ENCODE measurements at regions of chr2 and their contacts with region 1.

Region 1: GRCh38 chr2:188291617-188292347 is at the start of gene GULP1:
- DNase-seq: peak; percentile 75
- ATAC-seq: peak; percentile 45
- H3K4me3 ChIP-seq: peak within 1 kb of the TSS; percentile 87
- H3K27ac ChIP-seq: peak within 1 kb of the TSS; percentile 83
- H3K4me1 ChIP-seq: peaks cover 33% of the 10 kb centered on the region
- H3K27me3 ChIP-seq: no peaks in the 10 kb centered on the region
- CTCF ChIP-seq: peak; percentile 77
- total RNA-seq, gene GULP1: 23.1 and 25.5 TPM in 2 replicates

Region 2: GRCh38 chr2:187594801-187595200 is 697.0 kb before region 1 on chr2:
- CTCF ChIA-PET with region 1: no interaction called
- POLR2A ChIA-PET with region 1: no interaction called
- intact Hi-C with region 1: loop called (anchors 5 kb)
- DNase-seq: no peak
- ATAC-seq: no peak
- H3K4me3 ChIP-seq: no peak overlapping the region
- H3K27ac ChIP-seq: no peak overlapping the region
- H3K4me1 ChIP-seq: no peaks in the 10 kb centered on the region
- H3K27me3 ChIP-seq: no peaks in the 10 kb centered on the region
- CTCF ChIP-seq: peak; percentile 45; the same call in 1 of the 2 replicates

Region 3: GRCh38 chr2:188322569-188323551 is 31.1 kb after region 1 on chr2:
- CTCF ChIA-PET with region 1: no interaction called
- POLR2A ChIA-PET with region 1: interaction called, 7 read pairs
- intact Hi-C with region 1: loop called (anchors 1 kb)
- DNase-seq: peak; percentile 75
- ATAC-seq: peak; percentile 84
- H3K4me3 ChIP-seq: peak overlapping the region; percentile 51
- H3K27ac ChIP-seq: peak overlapping the region; percentile 99
- H3K4me1 ChIP-seq: peaks cover 39% of the 10 kb centered on the region
- H3K27me3 ChIP-seq: no peaks in the 10 kb centered on the region
- CTCF ChIP-seq: no peak

Region 4: DNA sequence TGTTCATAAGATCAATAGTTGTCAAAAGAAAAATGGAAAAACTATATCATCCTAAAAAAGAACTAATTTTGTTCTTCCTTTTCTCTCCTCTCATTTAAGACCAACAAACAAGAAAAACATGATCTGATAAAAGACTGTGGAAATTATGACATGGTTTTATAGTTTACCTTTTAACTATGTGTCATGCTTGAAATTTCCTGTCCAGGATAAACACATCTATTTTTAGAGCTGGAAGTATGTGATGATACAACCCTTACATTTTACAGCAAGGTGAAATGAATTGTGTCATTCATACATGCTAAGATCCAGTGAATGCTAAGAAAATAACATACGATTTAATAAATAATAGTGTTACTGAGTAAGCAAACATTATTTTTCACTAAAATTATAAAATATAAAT is 89.8 kb after region 1 on chr2:
- CTCF ChIA-PET with region 1: no interaction called
- POLR2A ChIA-PET with region 1: no interaction called
- intact Hi-C with region 1: loop called (anchors 2 kb)
- DNase-seq: peak; percentile 89
- ATAC-seq: peak; percentile 94
- H3K4me3 ChIP-seq: no peak overlapping the region
- H3K27ac ChIP-seq: peak overlapping the region; percentile 74
- H3K4me1 ChIP-seq: peaks cover 29% of the 10 kb centered on the region
- H3K27me3 ChIP-seq: no peaks in the 10 kb centered on the region
- CTCF ChIP-seq: no peak

Region 5: DNA sequence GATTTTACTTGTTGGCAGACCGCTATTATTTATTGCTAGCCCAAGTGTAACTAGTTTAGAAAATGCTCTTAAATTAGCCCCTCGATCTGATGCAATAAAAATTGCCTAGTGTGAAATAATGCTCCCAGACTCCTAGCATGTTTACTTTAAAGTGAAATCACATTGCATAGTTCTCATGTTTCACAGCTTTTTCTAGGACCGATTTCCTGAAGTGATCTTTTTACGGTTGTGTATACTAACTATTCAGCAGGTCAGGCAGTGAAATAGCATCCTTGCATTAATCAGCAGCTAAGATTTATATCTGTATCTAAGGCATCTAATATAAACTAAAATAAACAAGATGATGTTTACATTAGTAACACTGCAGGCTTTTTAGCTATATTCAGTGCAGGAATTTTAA is 1544.9 kb after region 1 on chr2:
- CTCF ChIA-PET with region 1: no interaction called
- POLR2A ChIA-PET with region 1: interaction called, 11 read pairs
- intact Hi-C with region 1: no loop called
- DNase-seq: peak; percentile 80
- ATAC-seq: peak; percentile 96
- H3K4me3 ChIP-seq: peak overlapping the region; percentile 3; the same call in 1 of the 2 replicates
- H3K27ac ChIP-seq: peak overlapping the region; percentile 65
- H3K4me1 ChIP-seq: peaks cover 17% of the 10 kb centered on the region
- H3K27me3 ChIP-seq: no peaks in the 10 kb centered on the region
- CTCF ChIP-seq: no peak